Psoas muscle (tissue), 8 donors: ENCODE measurements at regions of chr14 and their contacts with region 1.

Region 1: GRCh38 chr14:103185051-103185992 is 62.1 kb downstream of the TNFAIP2 start:
- DNase-seq: no peak
- ATAC-seq: peak in 3 of 4 donors; percentile 30 to 55 (median 51)
- H3K4me3 ChIP-seq: no peak overlapping the region
- H3K27ac ChIP-seq: no peak overlapping the region
- H3K4me1 ChIP-seq: peaks cover 4% of the 10 kb centered on the region
- H3K27me3 ChIP-seq: no peaks in the 10 kb centered on the region
- CTCF ChIP-seq: peak; percentile 61

Region 2: GRCh38 chr14:103104654-103105452 is 80.5 kb before region 1 on chr14:
- intact Hi-C with region 1: loop called (anchors 2 to 5 kb)
- DNase-seq: peak; percentile 68 to 86
- ATAC-seq: peak; percentile 67 to 87 (median 74)
- H3K4me3 ChIP-seq: no peak overlapping the region
- H3K27ac ChIP-seq: no peak overlapping the region
- H3K4me1 ChIP-seq: peaks cover 22% of the 10 kb centered on the region
- H3K27me3 ChIP-seq: peaks cover 0 to 50% (median 16%) of the 10 kb centered on the region in 3 donors
- CTCF ChIP-seq: peak; percentile 92

Region 3: DNA sequence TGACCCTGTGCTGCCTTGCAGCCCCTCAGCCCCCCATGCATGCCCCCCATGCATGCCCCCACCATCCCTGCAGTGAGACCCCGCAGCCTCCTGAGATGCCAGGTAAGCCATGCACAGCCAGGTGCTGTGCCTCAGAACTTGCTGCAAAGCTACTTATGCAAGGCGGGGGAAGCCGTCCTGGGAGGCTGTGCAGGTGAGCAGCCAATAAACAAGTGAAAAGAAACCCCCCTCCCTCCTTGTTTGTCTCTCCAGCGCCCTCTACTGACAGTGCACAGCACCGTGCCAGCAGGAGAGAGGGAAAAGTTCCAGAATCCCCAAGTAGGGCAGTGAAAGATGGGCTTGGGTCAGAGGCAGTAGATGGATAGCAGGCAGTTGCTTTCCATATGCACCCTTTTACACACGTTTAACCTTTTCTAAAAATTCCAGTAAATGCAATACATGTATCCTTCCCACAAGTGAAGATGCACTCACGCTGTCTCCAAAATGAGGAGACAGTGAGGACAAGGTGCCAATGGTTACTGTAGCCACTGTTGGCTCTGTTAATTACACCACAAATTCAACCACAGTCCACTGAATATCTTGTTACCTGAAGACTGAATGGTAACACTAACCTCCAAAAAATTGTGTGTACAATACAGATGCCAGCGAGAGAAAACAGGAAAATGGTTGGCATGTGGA is 44.1 kb before region 1 on chr14:
- intact Hi-C with region 1: loop called in 1 of 2 experiments (anchors 5 kb)
- DNase-seq: no peak
- ATAC-seq: peak in 1 of 4 donors; percentile 33
- H3K4me3 ChIP-seq: no peak overlapping the region
- H3K27ac ChIP-seq: no peak overlapping the region
- H3K4me1 ChIP-seq: peaks cover 10% of the 10 kb centered on the region
- H3K27me3 ChIP-seq: peaks cover 0 to 3% (median 0%) of the 10 kb centered on the region in 3 donors
- CTCF ChIP-seq: peak; percentile 60

Region 4: DNA sequence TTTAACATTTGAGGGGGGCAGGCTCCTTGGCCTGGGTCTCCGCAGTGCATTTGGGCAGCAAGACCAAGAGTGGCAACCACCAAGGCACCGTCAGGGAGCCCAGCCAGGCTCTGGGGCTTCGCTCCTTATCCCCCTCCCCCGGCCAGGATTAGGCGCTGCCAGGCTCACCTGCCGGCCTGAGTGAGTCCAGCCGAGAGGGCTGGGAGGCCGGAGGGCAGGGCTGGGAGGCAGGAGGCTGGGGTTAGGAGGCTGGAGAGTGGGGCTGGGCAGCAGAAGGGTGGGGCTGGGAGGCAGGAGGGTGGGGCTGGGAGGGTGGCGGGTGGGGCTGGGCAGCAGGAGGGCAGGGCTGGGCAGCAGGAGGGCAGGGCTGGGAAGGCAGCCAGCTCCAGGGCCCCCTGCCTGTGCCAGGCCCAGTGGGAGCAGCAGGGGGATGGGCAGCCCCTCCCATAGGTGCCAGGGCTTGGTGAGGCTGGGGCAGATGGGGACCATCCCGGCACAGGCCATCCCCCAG is 47.0 kb after region 1 on chr14:
- intact Hi-C with region 1: no loop called
- DNase-seq: no peak
- ATAC-seq: no peak
- H3K4me3 ChIP-seq: no peak overlapping the region
- H3K27ac ChIP-seq: no peak overlapping the region
- H3K4me1 ChIP-seq: no peaks in the 10 kb centered on the region
- H3K27me3 ChIP-seq: no peaks in the 10 kb centered on the region
- CTCF ChIP-seq: no peak

Region 5: GRCh38 chr14:103292426-103293374 is 107.4 kb after region 1 on chr14:
- intact Hi-C with region 1: loop called (anchors 2 to 5 kb)
- DNase-seq: peak; percentile 74 to 88
- ATAC-seq: peak; percentile 92 to 97 (median 95)
- H3K4me3 ChIP-seq: no peak overlapping the region
- H3K27ac ChIP-seq: no peak overlapping the region
- H3K4me1 ChIP-seq: no peaks in the 10 kb centered on the region
- H3K27me3 ChIP-seq: no peaks in the 10 kb centered on the region
- CTCF ChIP-seq: peak; percentile 90